GM10248 (cell line): ENCODE measurements at regions of chr19 and their contacts with region 1.

Region 1: GRCh38 chr19:14059093-14059480 is 2.8 kb downstream of the PALM3 start:
- DNase-seq: peak; percentile 77
- CTCF ChIP-seq: peak; percentile 71

Region 2: DNA sequence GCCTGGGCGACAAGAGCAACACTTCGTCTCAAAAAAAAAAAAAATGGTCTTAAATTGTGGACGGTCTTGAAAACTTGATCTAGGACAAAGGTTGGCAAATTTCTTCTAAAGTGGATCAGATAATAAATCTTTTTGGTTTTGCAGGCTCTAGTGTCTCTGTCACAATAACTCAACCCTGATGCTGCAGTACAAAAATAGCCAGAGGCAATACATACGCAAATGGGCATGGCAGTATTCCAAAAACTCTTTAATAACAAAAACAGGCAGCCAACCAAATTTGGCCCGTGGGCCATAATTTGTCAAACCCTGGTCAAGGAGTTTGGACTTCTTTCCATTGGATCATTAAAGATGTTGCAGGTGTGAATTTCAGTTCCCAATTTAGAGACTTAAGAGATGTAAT is 388.3 kb before region 1 on chr19:
- CTCF ChIA-PET with region 1: no interaction called
- POLR2A ChIA-PET with region 1: no interaction called
- DNase-seq: no peak
- CTCF ChIP-seq: no peak

Region 3: GRCh38 chr19:13909430-13909829 is 149.7 kb before region 1 on chr19:
- CTCF ChIA-PET with region 1: interaction called, 10 read pairs
- POLR2A ChIA-PET with region 1: no interaction called
- DNase-seq: no peak
- CTCF ChIP-seq: no peak

Region 4: GRCh38 chr19:13962699-13963602 is 96.1 kb before region 1 on chr19:
- CTCF ChIA-PET with region 1: no interaction called
- POLR2A ChIA-PET with region 1: no interaction called
- DNase-seq: no peak
- CTCF ChIP-seq: no peak

Region 5: DNA sequence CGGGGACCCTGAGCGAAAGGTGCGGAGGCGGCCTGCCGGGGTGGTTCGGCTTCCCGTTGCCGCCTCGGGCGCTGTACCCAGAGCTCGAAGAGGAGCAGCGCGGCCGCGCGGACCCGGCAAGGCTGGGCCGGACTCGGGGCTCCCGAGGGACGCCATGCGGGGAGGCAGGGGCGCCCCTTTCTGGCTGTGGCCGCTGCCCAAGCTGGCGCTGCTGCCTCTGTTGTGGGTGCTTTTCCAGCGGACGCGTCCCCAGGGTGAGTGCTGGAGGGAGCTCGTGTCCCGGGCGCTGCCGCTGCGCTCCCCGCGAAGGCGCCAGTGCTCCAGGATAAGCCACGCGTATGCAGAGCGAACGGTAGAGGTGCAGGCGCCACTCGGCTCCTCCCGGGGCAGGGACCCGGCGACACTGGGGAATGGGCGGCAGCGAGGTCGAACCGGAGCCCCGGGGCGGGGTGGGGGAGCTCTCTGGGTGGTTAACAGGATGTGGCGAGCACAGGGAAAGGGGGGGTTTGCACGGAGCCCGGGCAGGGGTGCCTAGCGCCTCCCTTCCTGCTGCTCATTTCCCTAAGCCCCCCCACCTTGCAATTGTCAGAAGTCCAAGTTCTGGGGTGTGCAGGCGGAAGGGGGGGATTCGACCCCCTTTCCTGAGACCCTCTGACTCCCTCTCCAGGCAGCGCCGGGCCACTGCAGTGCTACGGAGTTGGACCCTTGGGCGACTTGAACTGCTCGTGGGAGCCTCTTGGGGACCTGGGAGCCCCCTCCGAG is 27.2 kb before region 1 on chr19 and contains the start of gene IL27RA:
- CTCF ChIA-PET with region 1: interaction called, 169 read pairs
- POLR2A ChIA-PET with region 1: no interaction called
- DNase-seq: peak; percentile 81
- CTCF ChIP-seq: peak; percentile 85

Region 6: GRCh38 chr19:14048443-14049153 is 10.5 kb before region 1 on chr19:
- CTCF ChIA-PET with region 1: interaction called, 169 read pairs
- POLR2A ChIA-PET with region 1: no interaction called
- DNase-seq: peak; percentile 75
- CTCF ChIP-seq: peak; percentile 74

Region 7: GRCh38 chr19:14081325-14082093 is 22.4 kb after region 1 on chr19:
- CTCF ChIA-PET with region 1: interaction called, 14 read pairs
- POLR2A ChIA-PET with region 1: no interaction called
- DNase-seq: peak; percentile 98
- CTCF ChIP-seq: no peak